Activated CD4-positive, alpha-beta T cell treated with anti-CD3 and anti-CD28 coated beads, Interleukin-2, amount 10 ng/mL, durations not matched to agents 7 days and 5 days (primary cell): ENCODE measurements at regions of chr5 and their contacts with region 1.

Region 1: DNA sequence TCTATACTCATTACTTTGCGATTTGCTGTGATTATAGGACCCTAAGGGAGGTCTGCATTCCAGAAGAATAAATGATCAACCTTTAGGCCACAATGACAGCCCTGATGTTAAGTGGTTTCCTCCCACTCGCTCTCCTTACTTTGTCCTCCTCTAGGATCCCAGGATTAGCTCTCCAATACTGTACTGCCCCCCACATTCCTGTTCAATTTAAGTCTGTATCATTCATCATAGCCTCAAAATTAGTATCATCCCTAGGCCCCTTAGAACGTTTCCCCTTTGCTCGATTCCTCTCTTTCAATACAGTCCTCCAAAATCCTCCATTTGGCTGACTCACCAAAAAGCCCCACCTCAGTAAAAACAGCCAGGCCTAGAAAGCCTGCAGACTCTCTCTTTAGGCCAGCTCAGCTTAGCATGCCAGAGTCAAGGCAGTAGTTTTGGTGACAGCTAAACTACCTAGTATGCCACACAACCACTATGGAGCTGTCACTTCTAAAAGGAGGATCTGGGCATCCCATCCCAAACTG is 24.4 kb downstream of the RNF145 start:
- DNase-seq: no peak
- H3K4me3 Mint-ChIP-seq: no peak overlapping the region
- H3K27ac Mint-ChIP-seq: peak overlapping the region; percentile 5
- H3K4me1 Mint-ChIP-seq: peaks cover 51% of the 10 kb centered on the region
- H3K27me3 Mint-ChIP-seq: no peaks in the 10 kb centered on the region

Region 2: GRCh38 chr5:159149085-159149484 is 35.8 kb before region 1 on chr5:
- CTCF ChIA-PET with region 1: no interaction called
- POLR2A ChIA-PET with region 1: no interaction called
- DNase-seq: no peak
- H3K4me3 Mint-ChIP-seq: no peak overlapping the region
- H3K27ac Mint-ChIP-seq: no peak overlapping the region
- H3K4me1 Mint-ChIP-seq: no peaks in the 10 kb centered on the region
- H3K27me3 Mint-ChIP-seq: peaks cover 17% of the 10 kb centered on the region

Region 3: DNA sequence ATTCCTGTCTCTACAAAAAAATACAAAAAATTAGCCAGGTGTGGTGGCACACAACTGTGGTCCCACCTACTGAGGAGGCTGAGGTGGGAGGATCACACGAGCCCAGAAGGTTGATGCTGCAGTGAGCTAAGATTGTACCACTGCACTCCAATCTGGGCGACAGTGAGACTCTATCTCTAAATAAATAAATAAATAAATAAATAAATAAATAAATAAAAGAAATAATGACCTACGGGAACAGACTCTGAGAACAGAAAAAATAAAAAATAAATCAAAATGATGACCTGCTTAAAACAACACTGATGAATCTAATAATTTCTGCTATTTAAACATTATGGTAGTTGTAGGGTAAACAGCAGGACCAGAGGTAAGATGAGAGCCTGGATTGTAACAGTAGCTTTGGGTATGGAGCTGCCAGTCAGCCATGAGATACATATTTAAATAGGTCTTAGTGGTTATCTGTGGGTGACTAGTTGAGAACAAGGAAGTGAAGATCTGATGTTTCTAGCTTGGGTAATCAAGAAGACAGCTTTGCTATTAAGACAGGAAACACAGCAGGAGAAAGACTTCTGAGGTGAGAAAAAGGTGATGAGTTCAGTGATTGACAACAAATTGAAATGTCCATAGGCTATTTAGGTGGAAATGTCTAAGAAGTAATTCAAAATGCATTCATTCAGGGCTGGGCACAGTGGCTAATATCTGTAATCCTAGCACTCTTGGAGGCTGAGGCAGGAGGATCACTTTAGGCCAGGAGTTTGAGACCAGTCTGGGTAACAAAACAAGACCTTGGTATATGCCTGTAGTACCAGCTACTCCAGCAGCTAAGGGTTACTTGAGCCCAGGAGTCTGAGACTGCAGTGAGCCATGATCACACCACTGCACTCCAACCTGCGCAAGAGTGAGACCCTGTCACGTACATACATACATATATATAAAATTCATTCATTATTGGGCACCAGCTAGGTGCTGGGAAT is 13.4 kb after region 1 on chr5:
- CTCF ChIA-PET with region 1: interaction called, 10 read pairs
- POLR2A ChIA-PET with region 1: no interaction called
- DNase-seq: no peak
- H3K4me3 Mint-ChIP-seq: no peak overlapping the region
- H3K27ac Mint-ChIP-seq: peak overlapping the region; percentile 26
- H3K4me1 Mint-ChIP-seq: peaks cover 60% of the 10 kb centered on the region
- H3K27me3 Mint-ChIP-seq: no peaks in the 10 kb centered on the region

Region 4: DNA sequence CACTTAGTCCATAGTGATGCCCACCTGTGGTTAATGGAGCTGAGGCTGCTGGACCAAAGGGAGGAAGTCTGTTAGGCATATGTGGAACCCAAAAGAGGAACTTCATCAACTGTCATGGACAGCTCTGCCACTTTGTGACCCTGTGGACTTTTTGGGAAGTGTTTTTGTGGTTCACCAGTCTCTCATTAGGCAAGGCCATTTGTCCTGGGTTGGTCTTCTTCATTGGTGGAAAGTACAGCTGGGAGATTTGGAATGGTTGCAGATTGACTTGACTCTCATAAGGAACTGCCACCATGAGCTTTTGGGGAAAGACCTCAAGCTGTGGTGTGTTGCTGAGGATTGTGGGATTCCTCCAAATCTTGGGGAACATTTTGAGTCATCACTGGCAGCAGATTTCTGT is 177.3 kb after region 1 on chr5:
- CTCF ChIA-PET with region 1: no interaction called
- POLR2A ChIA-PET with region 1: no interaction called
- DNase-seq: no peak
- H3K4me3 Mint-ChIP-seq: no peak overlapping the region
- H3K27ac Mint-ChIP-seq: no peak overlapping the region
- H3K4me1 Mint-ChIP-seq: peaks cover 23% of the 10 kb centered on the region
- H3K27me3 Mint-ChIP-seq: peaks cover 15% of the 10 kb centered on the region